Endothelial cell of umbilical vein (primary cell): ENCODE measurements at regions of chr11 and their contacts with region 1.

Region 1: GRCh38 chr11:111878849-111879636 is at the starts of genes CFAP68 and FDXACB1:
- DNase-seq: peak; percentile 98
- H3K4me3 ChIP-seq: peak within 1 kb of the TSS; percentile 53 to 84 (median 62)
- H3K27ac ChIP-seq: peak within 1 kb of the TSS; percentile 93
- H3K4me1 ChIP-seq: peaks cover 21% of the 10 kb centered on the region
- H3K27me3 ChIP-seq: no peaks in the 10 kb centered on the region
- CTCF ChIP-seq: peak; percentile 97 to 98
- POLR2A ChIP-seq: peak; percentile 69
- total RNA-seq, gene CFAP68: 7.4 TPM in 2 replicates
- total RNA-seq, gene FDXACB1: 1.4 and 3.3 TPM in 2 replicates

Region 2: GRCh38 chr11:110704210-110704864 is 1174.7 kb before region 1 on chr11:
- CTCF ChIA-PET with region 1: no interaction called
- POLR2A ChIA-PET with region 1: no interaction called
- dilution Hi-C with region 1: no loop called
- intact Hi-C with region 1: no loop called
- DNase-seq: no peak
- H3K4me3 ChIP-seq: no peak overlapping the region
- H3K27ac ChIP-seq: no peak overlapping the region
- H3K4me1 ChIP-seq: no peaks in the 10 kb centered on the region
- H3K27me3 ChIP-seq: no peaks in the 10 kb centered on the region
- CTCF ChIP-seq: no peak
- POLR2A ChIP-seq: no peak

Region 3: DNA sequence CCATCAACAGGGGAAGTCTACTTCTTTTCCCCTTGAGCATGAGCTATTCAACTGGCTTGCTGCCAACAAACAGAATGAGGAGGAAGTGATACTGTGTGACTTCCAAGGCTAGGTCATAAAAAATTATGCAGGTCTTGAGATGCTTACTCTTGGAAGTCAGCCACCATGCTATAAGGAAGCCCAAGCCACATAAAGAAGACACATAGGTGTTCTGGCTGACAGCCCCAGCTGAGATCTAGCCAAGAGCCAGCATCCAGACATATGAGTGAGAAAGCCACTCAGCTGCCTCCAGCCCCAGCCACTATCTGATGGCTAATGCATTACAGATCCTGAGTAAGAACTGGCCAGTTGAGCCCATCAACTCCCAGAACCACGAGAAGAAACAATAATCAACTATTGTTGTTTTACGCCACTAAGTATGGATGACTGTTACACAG is 81.9 kb before region 1 on chr11:
- CTCF ChIA-PET with region 1: no interaction called
- POLR2A ChIA-PET with region 1: no interaction called
- dilution Hi-C with region 1: no loop called
- intact Hi-C with region 1: no loop called
- DNase-seq: peak; percentile 53
- H3K4me3 ChIP-seq: no peak overlapping the region
- H3K27ac ChIP-seq: no peak overlapping the region
- H3K4me1 ChIP-seq: no peaks in the 10 kb centered on the region
- H3K27me3 ChIP-seq: no peaks in the 10 kb centered on the region
- CTCF ChIP-seq: no peak
- POLR2A ChIP-seq: no peak

Region 4: DNA sequence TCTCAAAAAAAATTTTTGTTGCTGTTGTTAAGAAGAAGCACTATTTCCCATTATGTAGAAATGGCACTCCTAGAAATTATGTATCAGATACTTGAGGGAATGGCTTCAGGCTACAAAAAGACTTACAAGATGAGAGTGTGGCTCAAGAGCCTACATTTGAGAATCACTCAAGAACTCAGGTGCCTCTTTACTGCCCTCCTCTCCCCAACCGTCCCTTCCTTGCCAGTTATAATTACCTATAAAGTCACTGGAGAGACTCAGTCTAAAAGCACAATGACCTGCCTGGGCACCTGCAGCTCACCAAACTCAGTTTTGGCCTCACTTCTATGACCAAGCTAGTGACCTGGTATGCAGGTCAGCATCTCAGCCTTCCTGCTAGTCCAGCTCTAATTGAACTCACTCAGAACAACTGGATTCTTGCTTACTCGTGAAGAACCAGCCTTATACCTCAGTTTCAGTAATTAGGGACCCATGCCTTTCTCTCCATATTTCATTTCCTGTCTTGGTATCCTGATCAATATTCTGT is 70.9 kb before region 1 on chr11:
- CTCF ChIA-PET with region 1: no interaction called
- POLR2A ChIA-PET with region 1: no interaction called
- dilution Hi-C with region 1: no loop called
- intact Hi-C with region 1: no loop called
- DNase-seq: no peak
- H3K4me3 ChIP-seq: no peak overlapping the region
- H3K27ac ChIP-seq: no peak overlapping the region
- H3K4me1 ChIP-seq: no peaks in the 10 kb centered on the region
- H3K27me3 ChIP-seq: no peaks in the 10 kb centered on the region
- CTCF ChIP-seq: no peak
- POLR2A ChIP-seq: no peak

Region 5: GRCh38 chr11:111860257-111860656 is 18.8 kb before region 1 on chr11:
- CTCF ChIA-PET with region 1: no interaction called
- POLR2A ChIA-PET with region 1: interaction called, 10 read pairs
- dilution Hi-C with region 1: no loop called
- intact Hi-C with region 1: no loop called
- DNase-seq: no peak
- H3K4me3 ChIP-seq: no peak overlapping the region
- H3K27ac ChIP-seq: no peak overlapping the region
- H3K4me1 ChIP-seq: no peaks in the 10 kb centered on the region
- H3K27me3 ChIP-seq: no peaks in the 10 kb centered on the region
- CTCF ChIP-seq: no peak
- POLR2A ChIP-seq: no peak

Region 6: DNA sequence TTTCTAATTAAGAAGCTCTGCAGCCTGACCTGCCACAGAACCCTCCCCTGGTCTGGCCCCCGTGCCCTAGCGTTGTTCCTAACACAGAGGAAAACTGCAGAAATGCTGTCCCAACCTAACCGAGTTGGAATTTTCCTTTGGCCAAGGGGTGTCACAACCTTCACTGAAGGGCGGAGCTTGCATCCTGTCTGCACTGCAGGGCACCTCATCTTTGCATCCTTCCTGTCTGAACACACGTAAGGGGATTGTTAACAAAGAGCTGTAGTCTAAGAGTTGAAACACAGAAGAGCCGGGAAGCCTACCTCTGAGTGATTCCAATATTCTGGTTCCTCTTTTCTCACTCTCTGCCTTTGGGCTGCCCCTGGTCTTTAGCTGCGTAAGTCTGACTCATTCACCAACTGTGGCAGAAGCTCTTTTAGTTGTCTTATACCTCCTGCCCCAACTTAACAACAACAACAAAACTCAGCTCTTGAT is 59.7 kb after region 1 on chr11:
- CTCF ChIA-PET with region 1: no interaction called
- POLR2A ChIA-PET with region 1: no interaction called
- dilution Hi-C with region 1: no loop called
- intact Hi-C with region 1: loop called (anchors 1 kb)
- DNase-seq: peak; percentile 64
- H3K4me3 ChIP-seq: peak overlapping the region in 2 of 3 experiments; percentile 4 to 6
- H3K27ac ChIP-seq: peak overlapping the region; percentile 94
- H3K4me1 ChIP-seq: peaks cover 45% of the 10 kb centered on the region
- H3K27me3 ChIP-seq: no peaks in the 10 kb centered on the region
- CTCF ChIP-seq: no peak
- POLR2A ChIP-seq: no peak

Region 7: DNA sequence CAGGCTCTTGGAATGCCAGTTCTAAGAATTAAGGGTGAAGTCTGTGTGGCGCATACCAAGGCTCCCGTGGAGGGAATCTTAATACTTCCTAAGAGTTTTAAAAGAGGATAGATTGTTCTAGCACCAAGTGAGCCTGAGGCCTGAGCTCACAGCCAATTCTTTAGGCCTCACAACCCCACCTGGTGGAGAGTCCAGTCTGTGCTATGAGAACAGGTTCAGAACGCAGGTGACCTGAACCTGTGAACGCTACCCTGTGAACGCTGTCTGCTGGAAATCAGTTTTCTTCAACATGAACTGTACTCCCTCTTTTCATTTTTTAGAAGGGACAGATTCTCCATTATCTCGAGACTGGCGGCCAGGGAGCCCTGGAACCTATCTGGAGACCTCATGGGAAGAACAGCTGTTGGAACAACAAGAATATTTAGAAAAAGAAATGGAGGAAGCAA is 103.0 kb after region 1 on chr11:
- CTCF ChIA-PET with region 1: interaction called, 22 read pairs
- POLR2A ChIA-PET with region 1: no interaction called
- dilution Hi-C with region 1: no loop called
- intact Hi-C with region 1: loop called (anchors 1 kb)
- DNase-seq: peak; percentile 59
- H3K4me3 ChIP-seq: no peak overlapping the region
- H3K27ac ChIP-seq: no peak overlapping the region
- H3K4me1 ChIP-seq: peaks cover 16% of the 10 kb centered on the region
- H3K27me3 ChIP-seq: no peaks in the 10 kb centered on the region
- CTCF ChIP-seq: peak; percentile 55 to 73
- POLR2A ChIP-seq: no peak

Region 8: GRCh38 chr11:112024773-112025678 is 146.0 kb after region 1 on chr11 and contains the start of gene DLAT:
- CTCF ChIA-PET with region 1: no interaction called
- POLR2A ChIA-PET with region 1: no interaction called
- dilution Hi-C with region 1: no loop called
- intact Hi-C with region 1: loop called (anchors 1 kb)
- DNase-seq: peak; percentile 81
- H3K4me3 ChIP-seq: peak within 1 kb of the TSS; percentile 63 to 86 (median 82)
- H3K27ac ChIP-seq: peak within 1 kb of the TSS; percentile 64
- H3K4me1 ChIP-seq: peaks cover 11% of the 10 kb centered on the region
- H3K27me3 ChIP-seq: no peaks in the 10 kb centered on the region
- CTCF ChIP-seq: no peak
- POLR2A ChIP-seq: peak; percentile 63
- total RNA-seq, gene DLAT: 40.1 and 41.3 TPM in 2 replicates

Region 9: GRCh38 chr11:112086422-112087191 is 207.6 kb after region 1 on chr11 and contains the starts of genes SDHD and TIMM8B:
- CTCF ChIA-PET with region 1: no interaction called
- POLR2A ChIA-PET with region 1: no interaction called
- dilution Hi-C with region 1: no loop called
- intact Hi-C with region 1: loop called (anchors 1 kb)
- DNase-seq: peak; percentile 98
- H3K4me3 ChIP-seq: peak within 1 kb of the TSS; percentile 54 to 90 (median 86)
- H3K27ac ChIP-seq: peak within 1 kb of the TSS; percentile 54
- H3K4me1 ChIP-seq: peaks cover 13% of the 10 kb centered on the region
- H3K27me3 ChIP-seq: no peaks in the 10 kb centered on the region
- CTCF ChIP-seq: peak; percentile 17 to 62
- POLR2A ChIP-seq: peak; percentile 52
- total RNA-seq, gene SDHD: 72.3 and 79.0 TPM in 2 replicates
- total RNA-seq, gene TIMM8B: 64.1 and 77.0 TPM in 2 replicates

Region 10: GRCh38 chr11:112226062-112226830 is 347.2 kb after region 1 on chr11 and contains the start of gene PTS:
- CTCF ChIA-PET with region 1: no interaction called
- POLR2A ChIA-PET with region 1: no interaction called
- dilution Hi-C with region 1: no loop called
- intact Hi-C with region 1: loop called (anchors 2 kb)
- DNase-seq: peak; percentile 87
- H3K4me3 ChIP-seq: peak within 1 kb of the TSS; percentile 30 to 77 (median 73)
- H3K27ac ChIP-seq: peak within 1 kb of the TSS; percentile 96
- H3K4me1 ChIP-seq: peaks cover 14% of the 10 kb centered on the region
- H3K27me3 ChIP-seq: no peaks in the 10 kb centered on the region
- CTCF ChIP-seq: no peak
- POLR2A ChIP-seq: peak; percentile 96
- total RNA-seq, gene PTS: 41.9 and 45.7 TPM in 2 replicates